ENCODE measurements at regions of chr7 and their contacts with region 1.

Region 1: DNA sequence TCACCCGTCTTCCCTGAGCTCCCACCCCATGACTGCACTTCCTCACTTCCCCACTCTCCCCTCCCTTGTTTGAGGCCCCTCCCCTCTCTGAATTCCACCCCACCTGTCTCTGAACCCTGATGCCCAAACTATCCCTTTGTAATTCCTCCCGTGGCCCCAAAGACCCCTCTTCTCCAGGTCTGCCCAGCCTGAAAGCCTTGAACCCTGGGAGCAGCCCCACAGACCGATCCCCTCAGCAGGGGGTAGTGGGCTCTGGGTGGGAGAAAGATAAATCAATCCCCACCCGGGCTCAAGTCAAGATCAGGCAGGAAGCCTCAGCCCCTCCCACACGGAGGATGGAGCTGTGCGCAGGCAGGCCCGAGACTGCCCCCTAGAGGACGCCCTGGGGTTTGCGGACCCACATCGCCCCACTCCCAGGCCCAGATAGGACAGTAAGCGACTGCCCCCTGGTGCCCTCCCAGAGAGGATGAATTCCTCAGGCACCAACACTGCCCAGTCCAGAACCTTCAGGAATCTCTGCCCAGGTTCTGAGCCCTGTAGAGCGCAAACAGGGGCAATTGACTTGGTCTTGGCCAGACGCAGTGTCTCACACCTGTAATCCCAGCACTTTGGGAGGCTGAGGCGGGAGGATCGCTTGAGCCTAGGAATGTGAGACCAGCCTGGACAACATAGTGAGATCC is 11.7 kb downstream of the HSPB1 start:
- DNase-seq: peak; percentile 96 to 98
- ATAC-seq: peak; percentile 60 to 77 (median 68)
- H3K4me3 ChIP-seq: no peak overlapping the region
- H3K27ac ChIP-seq: peak overlapping the region in 1 of 10 donors; percentile 12
- H3K4me1 ChIP-seq: peaks cover 9 to 36% (median 23%) of the 10 kb centered on the region in 9 donors
- H3K27me3 ChIP-seq: no peaks in the 10 kb centered on the region
- CTCF ChIP-seq: peak; percentile 100

Region 2: DNA sequence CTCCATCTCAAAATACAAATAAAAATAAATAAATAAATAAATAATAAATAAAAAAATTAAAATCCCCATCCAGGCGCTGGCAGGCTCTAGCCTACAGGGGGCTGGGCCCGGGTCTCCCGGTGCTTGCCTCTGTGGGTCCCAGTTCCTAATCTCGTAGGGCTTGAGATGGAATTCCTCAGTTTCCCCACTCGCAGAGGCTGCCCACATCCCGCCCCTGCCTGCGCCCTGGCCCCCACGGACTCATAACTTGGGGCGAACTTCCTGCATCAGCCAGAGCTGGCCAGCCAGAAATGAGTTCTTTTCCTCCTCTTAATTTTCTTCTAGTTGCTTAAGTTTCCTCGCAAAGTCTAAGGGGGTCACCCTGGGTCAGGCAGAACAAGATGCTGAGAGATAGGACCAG is 134.5 kb before region 1 on chr7:
- intact Hi-C with region 1: loop called (anchors 1 to 10 kb)
- DNase-seq: no peak
- ATAC-seq: no peak
- H3K4me3 ChIP-seq: no peak overlapping the region
- H3K27ac ChIP-seq: no peak overlapping the region
- H3K4me1 ChIP-seq: peaks cover 0 to 10% (median 2%) of the 10 kb centered on the region in 9 donors
- H3K27me3 ChIP-seq: no peaks in the 10 kb centered on the region
- CTCF ChIP-seq: no peak

Region 3: DNA sequence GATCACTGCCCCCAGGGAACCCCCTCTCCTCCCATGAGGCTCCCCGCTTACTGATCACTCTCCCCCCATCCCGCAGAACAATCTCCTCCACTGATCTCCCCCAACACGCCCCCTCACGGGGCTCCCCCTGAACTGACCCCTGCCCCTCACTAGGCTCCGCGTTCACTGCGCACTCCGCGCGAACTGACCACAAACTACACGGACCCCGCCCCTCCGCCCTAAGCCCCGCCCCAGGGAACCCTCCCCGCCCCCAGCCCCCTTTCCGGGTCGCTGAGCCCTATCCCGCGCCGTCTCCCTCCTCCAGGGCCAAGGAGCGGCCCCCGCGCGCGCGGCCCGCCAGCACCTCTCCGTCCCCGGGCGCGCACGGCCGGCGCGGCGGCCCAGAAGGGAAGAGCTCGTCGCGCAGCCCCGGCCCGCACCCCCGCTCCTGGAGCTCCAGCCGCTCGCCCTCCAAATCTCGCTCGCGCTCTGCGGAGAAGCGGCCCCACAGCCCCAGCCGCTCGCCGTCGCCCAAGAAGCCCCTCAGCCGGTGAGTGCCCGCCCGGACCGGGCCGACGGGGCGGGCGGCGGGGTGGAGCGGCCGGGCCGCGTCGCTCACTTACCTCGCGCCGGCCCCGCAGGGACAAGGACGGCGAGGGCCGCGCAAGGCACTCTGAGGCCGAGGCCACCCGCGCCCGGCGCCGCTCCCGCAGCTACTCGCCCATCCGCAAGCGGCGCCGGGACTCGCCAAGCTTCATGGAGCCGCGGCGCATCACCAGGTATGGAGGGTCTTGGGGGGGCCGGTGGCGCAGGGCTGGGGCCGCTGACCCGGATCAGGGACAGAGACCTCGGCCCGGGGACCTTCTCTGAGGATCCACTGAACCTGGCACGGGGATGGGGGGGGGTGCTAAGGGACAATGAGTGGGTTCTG is 31.6 kb before region 1 on chr7:
- intact Hi-C with region 1: loop called in 1 of 10 experiments (anchors 5 kb)
- DNase-seq: peak in 1 of 2 donors; percentile 59
- ATAC-seq: peak; percentile 18 to 75 (median 64)
- H3K4me3 ChIP-seq: peak overlapping the region in 9 of 10 donors; percentile 45 to 57 (median 47)
- H3K27ac ChIP-seq: peak overlapping the region in 1 of 10 donors; percentile 29
- H3K4me1 ChIP-seq: peaks cover 0 to 5% (median 0%) of the 10 kb centered on the region in 9 donors
- H3K27me3 ChIP-seq: peaks cover 3 to 65% (median 31%) of the 10 kb centered on the region in 7 donors
- CTCF ChIP-seq: no peak

Region 4: GRCh38 chr7:76291343-76292212 is 22.6 kb before region 1 on chr7:
- intact Hi-C with region 1: loop called in 8 of 10 experiments (anchors 1 to 2 kb)
- DNase-seq: peak; percentile 89 to 91
- ATAC-seq: peak; percentile 69 to 85 (median 76)
- H3K4me3 ChIP-seq: peak overlapping the region in 9 of 10 donors; percentile 6 to 47 (median 39)
- H3K27ac ChIP-seq: peak overlapping the region; percentile 84 to 98 (median 94)
- H3K4me1 ChIP-seq: peaks cover 21 to 50% (median 44%) of the 10 kb centered on the region in 9 donors
- H3K27me3 ChIP-seq: no peaks in the 10 kb centered on the region
- CTCF ChIP-seq: peak; percentile 95 to 99 (median 97)

Region 5: DNA sequence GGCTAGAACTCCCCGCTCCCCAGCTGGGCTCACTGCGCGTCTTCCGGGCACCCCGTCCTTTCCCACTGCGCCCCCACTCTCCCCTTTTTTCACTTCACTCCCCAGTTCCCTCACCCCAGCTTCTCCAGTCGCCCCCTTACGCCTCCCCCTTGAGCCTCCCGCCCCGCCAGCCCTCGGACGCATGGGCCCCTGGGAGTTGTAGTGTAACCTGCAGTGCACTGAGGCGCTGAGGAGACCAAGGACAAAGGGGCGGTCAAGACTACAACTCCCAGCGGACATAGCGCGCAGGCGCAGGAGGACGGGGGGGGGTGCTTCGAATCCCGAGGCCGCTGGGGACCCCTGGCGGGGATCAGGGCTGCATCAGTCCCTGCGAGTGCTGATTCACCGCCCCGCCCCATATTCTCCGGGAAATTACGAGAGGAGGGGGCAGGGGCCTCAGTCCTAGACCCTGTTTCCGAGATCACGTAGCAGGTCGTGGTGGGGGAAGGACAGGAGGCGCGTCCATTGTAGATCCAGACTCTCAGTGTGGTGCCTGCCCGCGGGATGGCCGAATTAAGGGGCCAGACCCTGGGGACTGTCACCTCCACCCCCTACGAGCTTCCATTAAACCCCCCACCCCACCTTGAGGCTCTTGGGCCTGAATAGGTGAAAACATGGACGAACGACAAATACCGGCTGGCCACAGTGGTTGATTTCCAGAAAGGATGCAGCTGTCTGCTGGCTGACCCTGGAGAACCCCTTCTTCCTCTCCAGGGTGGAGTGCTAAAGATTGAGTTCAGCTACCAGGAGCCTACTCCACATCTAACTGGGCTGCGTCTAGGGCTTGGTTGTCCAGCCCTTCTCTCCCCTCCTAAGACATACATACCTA is 45.2 kb after region 1 on chr7:
- intact Hi-C with region 1: loop called in 8 of 10 experiments (anchors 1 to 5 kb)
- DNase-seq: peak; percentile 97 to 100
- ATAC-seq: peak; percentile 95 to 97 (median 96)
- H3K4me3 ChIP-seq: peak overlapping the region; percentile 82 to 100 (median 94)
- H3K27ac ChIP-seq: peak overlapping the region; percentile 88 to 100 (median 98)
- H3K4me1 ChIP-seq: peaks cover 12 to 59% (median 51%) of the 10 kb centered on the region in 9 donors
- H3K27me3 ChIP-seq: no peaks in the 10 kb centered on the region
- CTCF ChIP-seq: peak; percentile 51 to 93 (median 78)

Region 6: DNA sequence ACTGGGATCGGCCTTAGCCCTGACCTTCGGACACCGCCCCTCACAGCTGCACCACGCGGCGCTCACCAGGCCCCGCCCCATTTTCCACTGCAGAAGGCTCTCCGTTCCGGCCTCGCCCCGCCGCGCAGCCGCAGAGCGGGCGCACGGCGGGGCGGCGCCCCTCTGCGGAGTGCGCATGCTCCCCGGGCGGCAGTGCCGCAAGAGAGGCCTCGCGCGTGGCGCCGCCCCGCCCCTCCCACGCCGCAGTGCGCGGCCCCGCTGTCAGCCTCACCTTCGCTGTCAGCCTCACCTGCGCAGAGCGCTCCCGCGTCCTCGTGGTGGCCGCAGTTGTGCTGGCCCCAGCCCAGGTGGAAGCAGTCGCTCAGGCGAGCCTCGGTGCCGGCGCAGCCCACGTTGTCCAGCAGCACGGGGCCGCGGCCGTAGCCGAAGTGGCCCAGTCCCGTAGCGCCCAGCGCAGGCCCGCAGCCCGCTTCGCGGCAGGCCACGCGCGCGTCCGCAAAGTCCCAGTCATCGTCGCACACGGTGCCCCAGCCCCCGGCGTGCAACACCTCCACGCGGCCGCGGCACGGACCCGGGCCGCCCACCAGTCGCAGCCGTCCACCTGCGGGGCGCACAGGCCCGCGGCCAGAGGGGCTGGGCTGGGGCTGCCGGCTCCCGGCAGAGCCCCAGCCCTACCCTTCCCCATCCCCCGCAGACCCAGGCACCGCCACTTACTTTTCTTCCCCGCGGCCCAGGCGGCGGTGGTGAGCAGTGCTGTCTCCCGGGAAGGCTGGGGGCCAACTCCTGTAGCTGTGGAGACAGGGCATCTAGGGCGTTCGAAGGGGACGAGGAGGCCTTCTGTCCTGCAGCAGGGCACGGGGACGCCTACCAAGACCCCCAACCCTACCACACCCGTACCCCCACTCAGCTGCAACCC is 79.2 kb after region 1 on chr7:
- intact Hi-C with region 1: loop called in 1 of 10 experiments (anchors 1 kb)
- DNase-seq: peak; percentile 96
- ATAC-seq: peak; percentile 92 to 96 (median 94)
- H3K4me3 ChIP-seq: peak overlapping the region; percentile 40 to 84 (median 72)
- H3K27ac ChIP-seq: peak overlapping the region; percentile 78 to 96 (median 94)
- H3K4me1 ChIP-seq: peaks cover 3 to 45% (median 17%) of the 10 kb centered on the region in 9 donors
- H3K27me3 ChIP-seq: no peaks in the 10 kb centered on the region
- CTCF ChIP-seq: peak in 3 of 9 donors; percentile 12 to 20 (median 13)